Natural killer cell (primary cell): ENCODE measurements at regions of chr12 and their contacts with region 1.

Region 1: DNA sequence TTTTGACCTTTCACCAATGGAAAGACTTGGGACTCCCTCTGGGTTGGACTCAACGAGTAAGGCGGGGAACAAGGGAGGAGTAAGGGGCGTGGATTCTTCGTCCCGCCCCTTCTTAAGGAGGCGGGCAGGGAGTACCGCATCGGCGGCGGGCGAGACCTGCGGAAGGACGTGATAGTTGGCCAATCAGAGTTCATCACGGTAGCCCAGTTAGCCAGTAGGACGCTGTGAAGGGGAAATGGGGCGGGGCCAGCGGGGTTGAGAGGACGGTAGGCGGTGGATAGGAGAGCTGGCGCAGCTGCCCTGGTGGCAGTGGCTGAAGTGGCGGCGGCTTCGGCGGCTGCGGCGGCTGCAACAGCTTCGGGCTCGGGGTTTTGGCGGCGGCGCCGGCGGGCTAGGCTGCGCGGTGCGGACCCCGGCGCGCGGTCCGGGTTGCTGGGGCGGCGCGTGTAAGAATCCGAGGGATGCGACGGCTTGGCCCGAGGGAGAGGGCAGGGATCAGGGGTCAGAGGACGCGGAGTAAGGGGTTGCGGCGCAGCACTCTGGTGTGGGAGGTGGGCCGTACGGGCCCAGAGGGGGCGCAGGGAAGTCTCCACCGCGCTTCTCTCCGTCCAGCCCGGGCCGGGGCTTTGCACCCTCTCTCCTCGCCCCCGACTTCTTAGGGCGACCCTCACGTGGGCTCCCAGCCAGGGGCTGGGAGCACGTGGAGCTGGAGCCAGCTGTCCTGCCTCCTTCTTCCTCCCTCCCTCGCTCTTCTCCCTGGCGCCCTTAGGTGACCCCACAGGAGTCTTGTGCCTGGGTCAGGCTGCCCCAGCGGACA is at the start of gene TPCN1:
- DNase-seq: peak; percentile 98 to 100
- ATAC-seq: peak; percentile 93 to 99 (median 94)
- H3K4me3 ChIP-seq: peak within 1 kb of the TSS; percentile 73
- H3K4me3 Mint-ChIP-seq: peak within 1 kb of the TSS; percentile 85
- H3K27ac ChIP-seq: peak within 1 kb of the TSS; percentile 70
- H3K27ac Mint-ChIP-seq: peak within 1 kb of the TSS; percentile 81 to 85
- H3K4me1 ChIP-seq: peaks cover 29% of the 10 kb centered on the region
- H3K4me1 Mint-ChIP-seq: peaks cover 22 to 28% of the 10 kb centered on the region in 2 donors
- H3K27me3 ChIP-seq: no peaks in the 10 kb centered on the region
- H3K27me3 Mint-ChIP-seq: no peaks in the 10 kb centered on the region
- CTCF ChIP-seq: no peak
- total RNA-seq, gene TPCN1: 7.2 to 21.4 (median 10.7) TPM

Region 2: GRCh38 chr12:113142173-113142885 is 79.1 kb before region 1 on chr12:
- intact Hi-C with region 1: no loop called
- DNase-seq: no peak
- ATAC-seq: no peak
- H3K4me3 ChIP-seq: no peak overlapping the region
- H3K4me3 Mint-ChIP-seq: no peak overlapping the region
- H3K27ac ChIP-seq: peak overlapping the region; percentile 56
- H3K27ac Mint-ChIP-seq: no peak overlapping the region
- H3K4me1 ChIP-seq: peaks cover 8% of the 10 kb centered on the region
- H3K4me1 Mint-ChIP-seq: no peaks in the 10 kb centered on the region
- H3K27me3 ChIP-seq: no peaks in the 10 kb centered on the region
- H3K27me3 Mint-ChIP-seq: peaks cover 0 to 2% of the 10 kb centered on the region in 2 donors
- CTCF ChIP-seq: no peak

Region 3: DNA sequence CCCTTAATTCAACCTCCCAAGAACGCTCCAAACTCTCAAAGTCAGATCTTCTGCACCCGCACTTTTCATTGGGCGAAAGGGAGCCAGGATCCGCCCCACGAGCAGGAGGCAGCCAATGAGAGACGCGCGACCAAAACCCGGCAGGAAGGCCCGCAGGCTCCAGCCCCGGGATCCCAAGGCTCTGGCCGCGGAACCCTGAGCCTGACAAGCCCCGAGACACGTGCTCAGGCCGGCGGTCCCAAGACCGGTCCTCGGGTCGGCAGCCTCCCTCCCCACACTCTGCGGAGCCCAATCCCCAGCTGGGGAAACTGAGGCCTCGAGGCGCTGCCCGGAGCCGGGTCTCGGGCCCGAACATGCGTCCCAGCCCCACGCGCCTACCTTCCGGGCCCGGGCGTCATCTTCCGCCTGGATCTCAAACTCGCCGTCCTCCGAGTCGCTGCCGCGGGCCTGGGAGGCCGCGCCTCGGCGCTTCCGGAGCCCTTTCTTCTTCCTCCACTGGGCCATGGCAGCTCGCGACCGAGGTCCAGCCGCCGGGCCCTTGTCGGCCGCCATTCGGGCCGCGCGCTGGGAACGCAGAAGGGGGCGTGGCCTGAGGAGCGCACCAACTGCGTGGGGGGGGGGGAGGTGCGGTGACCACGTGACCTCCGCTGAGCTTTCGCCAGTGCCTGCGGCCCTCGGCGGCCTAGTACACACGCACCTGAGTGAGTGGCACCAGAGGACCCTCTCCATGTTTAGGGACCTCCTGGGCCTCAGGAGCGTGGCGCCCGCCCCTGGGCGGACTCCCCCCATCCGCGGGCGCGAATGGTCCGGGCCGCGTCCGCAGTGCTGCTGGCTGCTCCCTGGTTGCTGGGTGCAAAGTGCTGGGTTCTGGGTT is 36.3 kb before region 1 on chr12 and contains the starts of genes DDX54 and RITA1:
- intact Hi-C with region 1: loop called (anchors 1 kb)
- DNase-seq: peak; percentile 85 to 94
- ATAC-seq: peak; percentile 83 to 88 (median 85)
- H3K4me3 ChIP-seq: peak within 1 kb of the TSS; percentile 89
- H3K4me3 Mint-ChIP-seq: peak within 1 kb of the TSS; percentile 96
- H3K27ac ChIP-seq: peak within 1 kb of the TSS; percentile 95
- H3K27ac Mint-ChIP-seq: peak within 1 kb of the TSS; percentile 87 to 94
- H3K4me1 ChIP-seq: peaks cover 29% of the 10 kb centered on the region
- H3K4me1 Mint-ChIP-seq: peaks cover 40 to 41% of the 10 kb centered on the region in 2 donors
- H3K27me3 ChIP-seq: no peaks in the 10 kb centered on the region
- H3K27me3 Mint-ChIP-seq: no peaks in the 10 kb centered on the region
- CTCF ChIP-seq: no peak
- total RNA-seq, gene DDX54: 84.6 to 100 (median 97.1) TPM
- total RNA-seq, gene RITA1: 7.7 to 13.8 (median 12.0) TPM

Region 4: DNA sequence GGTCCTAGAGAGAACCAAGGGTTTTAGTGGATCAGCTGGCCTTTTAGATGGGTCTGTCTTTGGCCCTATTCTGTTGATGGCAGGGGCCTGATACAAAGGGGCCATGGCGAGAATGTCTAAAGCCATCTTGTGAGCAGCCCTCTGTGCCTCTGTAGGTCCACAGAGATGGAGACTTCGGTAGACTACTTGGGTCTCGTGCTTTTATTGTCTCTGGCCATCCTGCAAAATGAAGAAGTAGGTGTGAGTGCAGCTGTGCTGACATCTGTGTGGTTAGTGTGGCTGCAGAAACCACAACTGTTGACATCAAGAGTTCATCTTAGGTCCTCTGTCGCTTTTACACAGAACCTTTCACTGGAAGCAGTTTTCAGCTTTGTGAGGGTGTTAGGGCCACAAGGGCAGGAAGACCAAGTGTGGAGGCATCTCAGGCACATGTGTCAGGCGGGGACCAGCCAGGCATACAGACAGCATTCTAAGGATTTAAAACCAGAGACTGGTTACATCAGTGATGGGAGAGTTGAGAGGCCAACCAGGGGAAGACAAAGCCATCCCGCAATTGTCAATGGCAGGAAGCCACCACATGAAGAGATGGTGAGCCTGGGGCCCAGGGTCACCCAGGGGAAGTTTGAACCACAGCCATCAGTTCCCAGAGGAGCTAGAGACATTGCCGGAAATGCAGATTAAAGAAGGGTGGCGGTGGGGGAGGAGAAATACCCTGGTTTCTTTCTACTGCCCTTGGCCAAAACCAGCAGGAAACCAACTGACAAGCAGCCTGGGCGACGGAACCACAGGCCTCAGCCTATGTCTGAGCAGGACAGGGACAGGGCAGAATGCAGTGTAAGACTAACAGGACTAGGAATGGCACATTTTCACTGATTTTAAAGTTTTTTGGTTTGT is 13.1 kb before region 1 on chr12:
- intact Hi-C with region 1: loop called (anchors 1 kb)
- DNase-seq: peak; percentile 65 to 89
- ATAC-seq: peak; percentile 84 to 92 (median 85)
- H3K4me3 ChIP-seq: no peak overlapping the region
- H3K4me3 Mint-ChIP-seq: peak overlapping the region; percentile 87
- H3K27ac ChIP-seq: peak overlapping the region; percentile 82
- H3K27ac Mint-ChIP-seq: peak overlapping the region; percentile 92 to 97
- H3K4me1 ChIP-seq: peaks cover 49% of the 10 kb centered on the region
- H3K4me1 Mint-ChIP-seq: peaks cover 34 to 43% of the 10 kb centered on the region in 2 donors
- H3K27me3 ChIP-seq: no peaks in the 10 kb centered on the region
- H3K27me3 Mint-ChIP-seq: no peaks in the 10 kb centered on the region
- CTCF ChIP-seq: no peak

Region 5: DNA sequence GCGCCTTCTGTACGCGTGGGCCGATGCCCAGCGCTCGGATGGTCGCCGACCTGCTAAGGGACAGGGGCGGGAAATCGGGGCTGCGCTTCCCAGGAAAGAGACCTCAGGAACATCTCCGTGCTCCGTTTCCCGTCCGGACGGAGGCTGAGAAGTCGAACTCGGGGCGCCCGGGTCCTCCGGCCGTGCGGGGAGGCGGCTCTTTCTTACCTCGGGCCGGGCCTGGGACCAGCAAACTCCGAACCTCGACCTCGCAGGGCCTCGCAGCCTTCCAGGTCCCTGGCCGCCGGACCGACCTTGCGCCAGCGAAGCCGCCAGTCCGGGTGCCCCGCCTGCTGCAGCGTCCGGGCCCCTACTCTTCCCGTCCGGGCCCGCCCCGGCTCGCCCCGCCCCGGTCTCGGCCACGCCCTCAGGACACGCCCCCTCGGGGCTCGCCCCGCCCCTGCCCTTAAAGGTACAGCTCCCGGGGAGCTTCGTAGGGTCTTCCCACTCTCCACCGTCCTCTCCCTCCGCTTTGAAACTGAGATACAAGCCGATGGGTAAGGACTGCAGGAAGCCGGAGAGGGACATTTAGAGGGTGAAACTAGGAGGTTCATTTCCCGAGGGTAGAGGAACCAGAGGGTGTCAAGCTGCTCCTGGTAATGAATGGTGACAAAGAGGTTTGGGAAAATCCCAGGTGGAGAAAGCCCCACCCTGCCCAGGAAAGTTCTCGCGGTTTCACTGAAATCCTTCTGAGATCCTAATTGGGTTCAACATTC is 113.6 kb after region 1 on chr12 and contains the start of gene SLC8B1:
- intact Hi-C with region 1: loop called (anchors 1 kb)
- DNase-seq: peak; percentile 84 to 86
- ATAC-seq: peak; percentile 99 to 100 (median 100)
- H3K4me3 ChIP-seq: peak within 1 kb of the TSS; percentile 83
- H3K4me3 Mint-ChIP-seq: peak within 1 kb of the TSS; percentile 93
- H3K27ac ChIP-seq: peak within 1 kb of the TSS; percentile 27
- H3K27ac Mint-ChIP-seq: peak within 1 kb of the TSS; percentile 57 to 74
- H3K4me1 ChIP-seq: peaks cover 30% of the 10 kb centered on the region
- H3K4me1 Mint-ChIP-seq: peaks cover 18 to 40% of the 10 kb centered on the region in 2 donors
- H3K27me3 ChIP-seq: no peaks in the 10 kb centered on the region
- H3K27me3 Mint-ChIP-seq: no peaks in the 10 kb centered on the region
- CTCF ChIP-seq: no peak
- total RNA-seq, gene SLC8B1: 26.1 to 34.4 (median 31.2) TPM

Region 6: DNA sequence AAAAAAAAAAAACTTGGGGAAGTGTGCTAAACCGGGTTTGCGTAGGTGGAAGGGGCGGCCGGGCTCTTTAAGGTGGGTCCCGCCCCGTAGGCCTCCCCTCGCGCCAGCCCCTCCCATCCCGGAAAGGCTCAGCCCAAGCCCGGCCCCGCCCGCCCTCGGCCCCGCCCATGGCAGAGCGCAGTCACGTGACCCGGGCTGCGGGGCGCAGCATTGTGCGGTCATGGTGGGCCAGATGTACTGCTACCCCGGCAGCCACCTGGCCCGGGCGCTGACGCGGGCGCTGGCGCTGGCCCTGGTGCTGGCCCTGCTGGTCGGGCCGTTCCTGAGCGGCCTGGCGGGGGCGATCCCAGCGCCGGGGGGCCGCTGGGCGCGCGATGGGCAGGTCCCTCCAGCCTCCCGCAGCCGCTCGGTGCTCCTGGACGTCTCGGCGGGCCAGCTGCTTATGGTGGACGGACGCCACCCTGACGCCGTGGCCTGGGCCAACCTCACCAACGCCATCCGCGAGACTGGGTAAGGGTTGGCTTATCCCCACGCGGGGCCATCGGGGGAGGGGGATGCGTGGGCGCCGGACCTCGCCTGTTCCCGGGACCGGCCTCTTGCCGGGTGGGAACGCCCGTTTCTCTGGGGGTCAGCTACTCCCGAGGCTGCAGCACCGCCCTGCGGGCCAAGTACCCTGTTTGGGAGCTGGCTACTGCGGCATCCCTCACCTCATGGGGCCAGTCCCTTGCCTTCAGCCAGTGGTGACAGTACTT is 137.2 kb after region 1 on chr12 and contains the start of gene PLBD2:
- intact Hi-C with region 1: loop called (anchors 1 kb)
- DNase-seq: peak; percentile 88 to 97
- ATAC-seq: peak; percentile 95 to 99 (median 96)
- H3K4me3 ChIP-seq: peak within 1 kb of the TSS; percentile 67
- H3K4me3 Mint-ChIP-seq: peak within 1 kb of the TSS; percentile 87
- H3K27ac ChIP-seq: peak within 1 kb of the TSS; percentile 61
- H3K27ac Mint-ChIP-seq: peak within 1 kb of the TSS; percentile 70 to 85
- H3K4me1 ChIP-seq: peaks cover 21% of the 10 kb centered on the region
- H3K4me1 Mint-ChIP-seq: peaks cover 15 to 20% of the 10 kb centered on the region in 2 donors
- H3K27me3 ChIP-seq: no peaks in the 10 kb centered on the region
- H3K27me3 Mint-ChIP-seq: peaks cover 0 to 3% of the 10 kb centered on the region in 2 donors
- CTCF ChIP-seq: no peak
- total RNA-seq, gene PLBD2: 15.5 to 18.1 (median 16.3) TPM